Spleen (tissue), 13 donors: ENCODE measurements at regions of chr5 and their contacts with region 1.

Region 1: DNA sequence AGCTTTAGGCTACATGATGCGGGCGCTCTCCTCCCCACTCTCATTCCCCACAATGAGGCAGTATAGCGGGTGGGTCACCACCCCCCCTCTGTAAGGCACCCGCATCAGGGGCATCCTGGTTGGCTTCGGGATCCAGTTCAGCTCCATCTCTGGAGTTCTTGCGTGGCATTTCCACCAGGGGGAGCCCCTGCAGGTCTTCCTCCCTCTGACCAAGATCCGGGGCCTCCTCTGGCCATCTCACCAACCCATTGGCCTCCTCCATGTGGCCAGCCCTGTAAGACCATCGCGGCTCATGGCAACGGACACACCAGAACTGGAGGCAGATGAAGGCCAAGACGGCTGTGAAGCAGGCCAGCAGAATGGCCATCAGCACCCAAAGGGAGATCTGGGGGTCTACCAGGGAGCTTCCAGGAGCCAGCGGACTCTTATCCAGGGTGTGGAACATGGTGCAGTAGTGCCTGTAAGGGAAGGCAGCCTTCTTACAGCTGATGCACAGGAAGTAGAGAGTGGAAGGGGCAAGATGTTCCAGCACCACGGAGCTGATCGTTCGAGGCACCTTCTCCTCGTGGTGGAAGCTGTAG is 77.0 kb downstream of the CYFIP2 start:
- DNase-seq: no peak
- H3K4me3 ChIP-seq: no peak overlapping the region
- H3K27ac ChIP-seq: no peak overlapping the region
- H3K4me1 ChIP-seq: no peaks in the 10 kb centered on the region
- H3K27me3 ChIP-seq: no peaks in the 10 kb centered on the region
- CTCF ChIP-seq: peak in 8 of 11 experiments; percentile 18 to 65 (median 56)
- POLR2A ChIP-seq: no peak

Region 2: DNA sequence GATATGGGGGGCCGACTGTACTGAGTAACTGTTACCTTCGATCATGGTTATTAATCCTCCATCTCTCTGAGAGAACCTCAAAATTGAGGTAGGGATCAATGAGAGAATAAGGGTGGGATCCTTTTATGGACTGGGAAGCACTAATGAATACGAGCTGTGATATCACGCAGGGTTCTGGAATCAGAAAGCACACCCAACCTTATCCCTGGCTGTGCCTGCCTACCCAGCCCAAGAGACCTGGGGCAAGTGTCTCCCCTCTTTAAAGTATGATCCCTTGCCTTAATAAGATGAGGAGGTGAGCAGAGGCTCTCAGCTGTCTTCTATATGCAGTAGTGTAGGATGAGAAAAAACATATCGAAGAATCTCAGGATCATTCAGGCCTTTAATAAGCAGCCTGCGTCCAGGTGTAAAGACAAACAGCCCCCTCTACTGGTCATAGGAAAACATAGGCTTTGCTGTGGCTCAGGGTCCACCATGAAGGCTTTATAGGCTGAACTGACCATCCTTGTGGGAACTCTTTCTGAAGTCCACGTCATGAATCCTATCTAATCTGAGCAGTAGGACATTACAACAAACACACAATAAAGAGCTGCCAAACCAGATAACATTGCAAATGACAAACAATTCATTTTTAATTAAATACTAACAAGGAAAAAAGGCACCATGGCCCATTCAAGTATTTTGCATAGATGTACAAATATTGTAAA is 133.9 kb after region 1 on chr5:
- intact Hi-C with region 1: loop called (anchors 10 kb)
- DNase-seq: no peak
- H3K4me3 ChIP-seq: no peak overlapping the region
- H3K27ac ChIP-seq: peak overlapping the region in 1 of 8 donors; percentile 58
- H3K4me1 ChIP-seq: peaks cover 5 to 67% (median 21%) of the 10 kb centered on the region in 6 donors
- H3K27me3 ChIP-seq: no peaks in the 10 kb centered on the region
- CTCF ChIP-seq: peak in 10 of 11 experiments; percentile 41 to 82 (median 70)
- POLR2A ChIP-seq: no peak

Region 3: DNA sequence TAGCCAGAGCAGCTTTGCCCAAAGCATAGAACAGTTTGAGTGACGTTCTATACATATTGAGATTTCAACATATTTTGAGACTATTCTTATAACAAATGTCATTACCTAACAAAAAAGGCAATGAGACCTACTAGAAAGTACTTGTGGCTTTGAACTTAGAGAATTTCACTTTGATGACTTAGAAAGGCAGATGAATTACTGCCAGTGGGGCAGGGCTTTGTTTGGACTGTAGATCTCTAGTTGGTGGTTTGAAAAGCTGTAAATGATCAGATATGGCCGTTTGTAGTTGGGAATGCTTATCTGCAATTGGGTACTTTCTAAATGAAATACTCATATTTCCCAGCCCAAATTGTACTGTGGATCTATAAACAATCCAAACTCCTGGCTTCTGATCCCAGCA is 281.2 kb after region 1 on chr5:
- intact Hi-C with region 1: no loop called
- DNase-seq: no peak
- H3K4me3 ChIP-seq: no peak overlapping the region
- H3K27ac ChIP-seq: no peak overlapping the region
- H3K4me1 ChIP-seq: no peaks in the 10 kb centered on the region
- H3K27me3 ChIP-seq: no peaks in the 10 kb centered on the region
- CTCF ChIP-seq: no peak
- POLR2A ChIP-seq: no peak